Sciatic nerve (tissue), 2 donors: ENCODE measurements at regions of chr10 and their contacts with region 1.

Region 1: GRCh38 chr10:19007031-19007430 is 41.6 kb upstream of the MALRD1 start:
- DNase-seq: no peak
- ATAC-seq: no peak

Region 2: GRCh38 chr10:20020677-20021076 is 1013.6 kb after region 1 on chr10:
- intact Hi-C with region 1: loop called (anchors 5 kb)
- DNase-seq: no peak
- ATAC-seq: no peak